ENCODE measurements at regions of chr1 and their contacts with region 1.

Region 1: DNA sequence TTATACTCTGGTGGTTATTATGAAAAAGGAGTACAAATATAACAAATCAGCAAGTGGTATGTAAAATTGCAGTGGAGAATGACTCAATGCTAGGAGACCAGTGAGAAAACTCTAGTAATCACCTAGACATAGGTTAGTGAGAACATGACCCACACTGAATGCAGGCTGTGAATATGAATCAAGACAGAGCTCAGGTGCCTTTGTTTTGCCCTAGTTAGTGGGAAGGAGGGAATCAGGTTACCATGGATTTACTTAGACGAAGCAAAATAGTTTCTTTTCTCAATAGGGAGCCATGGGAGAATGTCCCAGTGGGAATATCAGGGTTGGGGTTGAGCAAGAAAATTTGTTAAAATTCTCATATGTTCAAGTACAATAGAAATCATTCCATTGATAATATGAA is 10.6 kb upstream of the GCLM start:
- DNase-seq: no peak
- H3K4me3 ChIP-seq: no peak overlapping the region
- CTCF ChIP-seq: no peak

Region 2: DNA sequence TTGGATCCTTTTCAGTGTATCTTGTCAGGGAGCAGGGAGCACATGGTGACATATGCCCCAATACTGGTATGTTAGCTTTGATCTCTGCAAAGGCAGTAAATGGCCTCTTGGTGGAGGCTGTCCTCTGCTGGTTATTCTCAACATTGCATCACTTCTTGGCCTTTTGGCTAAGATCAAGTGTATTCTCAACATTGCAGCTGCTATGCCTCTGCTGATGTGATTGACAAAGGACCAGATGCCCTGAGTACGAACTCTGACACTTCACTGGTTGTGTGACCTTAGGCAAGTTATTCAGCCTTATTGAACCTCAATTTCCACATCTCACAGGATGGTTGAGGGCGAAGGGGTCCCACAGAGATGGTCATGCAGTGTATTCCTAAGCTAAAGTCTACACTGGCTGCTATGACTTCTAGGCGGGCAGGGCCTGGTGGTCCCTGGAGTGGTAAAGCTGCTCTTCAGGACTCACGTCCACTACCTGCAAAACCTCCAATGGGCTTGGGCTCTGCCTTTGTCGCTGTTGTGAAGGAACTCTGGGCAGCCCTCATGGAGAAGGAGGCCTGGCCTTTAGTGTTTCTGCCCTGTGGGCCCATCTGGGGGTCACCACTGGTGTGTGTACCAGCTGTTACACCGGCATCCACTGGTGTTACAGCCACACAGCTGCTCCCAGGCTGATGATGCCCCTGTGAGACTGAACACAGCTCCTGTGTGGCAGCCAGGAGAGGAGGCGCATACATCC is 105.6 kb before region 1 on chr1:
- in situ Hi-C with region 1: no loop called
- DNase-seq: peak; percentile 69
- H3K4me3 ChIP-seq: no peak overlapping the region
- CTCF ChIP-seq: peak; percentile 99

Region 3: DNA sequence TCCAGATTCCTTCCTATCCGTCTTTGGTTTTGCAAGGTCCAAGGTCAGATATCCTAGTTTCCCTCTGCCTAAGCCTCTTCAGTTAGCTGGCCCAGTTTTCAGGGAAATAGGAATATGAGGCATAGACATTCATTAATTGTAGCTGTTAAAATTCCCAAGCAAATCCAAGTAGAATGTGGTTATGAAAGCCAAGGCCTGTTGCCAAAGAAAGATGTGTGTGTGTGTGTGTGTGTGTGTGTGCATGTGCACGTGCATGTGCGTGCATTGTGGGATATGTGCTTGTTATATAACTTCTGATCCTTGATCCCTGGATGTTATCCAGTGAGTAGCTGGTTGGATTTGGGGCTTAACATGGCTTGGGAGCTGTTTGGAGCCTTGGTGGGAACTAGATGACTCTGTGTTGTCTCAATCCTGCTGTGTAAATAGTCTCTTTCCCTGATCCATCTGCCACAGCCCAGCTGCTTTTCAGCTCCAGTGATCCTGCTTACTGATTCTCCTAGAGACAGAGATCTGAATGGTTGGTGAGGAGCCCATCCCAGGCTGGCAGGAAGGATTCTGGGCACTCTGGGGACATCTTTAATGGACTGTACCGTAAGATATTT is 60.0 kb after region 1 on chr1:
- in situ Hi-C with region 1: loop called (anchors 5 kb)
- DNase-seq: no peak
- H3K4me3 ChIP-seq: no peak overlapping the region
- CTCF ChIP-seq: no peak

Region 4: GRCh38 chr1:94004924-94005323 is 85.1 kb after region 1 on chr1:
- in situ Hi-C with region 1: loop called (anchors 5 kb)
- DNase-seq: no peak
- H3K4me3 ChIP-seq: no peak overlapping the region
- CTCF ChIP-seq: no peak